ENCODE measurements at regions of chr3 and their contacts with region 1.

Region 1: DNA sequence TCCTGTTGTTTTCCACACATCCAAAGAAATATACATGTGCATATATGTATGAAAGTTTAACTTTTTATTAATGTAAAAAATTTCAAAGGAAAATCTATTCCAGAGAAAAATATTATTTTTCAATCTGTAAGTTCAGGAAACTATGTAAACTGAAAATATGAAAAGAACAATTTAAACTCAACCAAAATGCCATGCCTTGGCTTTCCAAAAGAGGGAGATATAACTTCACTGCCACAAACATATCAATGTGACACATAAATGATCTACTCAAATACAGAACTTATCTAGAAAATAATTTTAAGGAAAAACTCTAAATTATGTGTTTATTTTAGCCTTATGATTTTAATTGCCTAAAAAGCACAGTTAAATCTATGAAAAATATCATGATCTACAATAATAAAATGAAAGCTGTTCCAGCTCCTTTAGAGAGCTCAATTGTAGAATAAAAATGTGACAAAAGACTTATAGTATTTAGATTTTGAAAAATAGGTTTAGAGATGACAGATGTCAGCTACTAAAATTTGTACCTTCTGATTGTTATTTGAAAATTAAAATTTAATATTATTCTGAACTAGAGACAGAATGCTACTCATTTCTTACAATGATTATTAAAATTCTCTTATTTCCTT is 94.8 kb downstream of the GBE1 start:
- DNase-seq: peak; percentile 51
- ATAC-seq: peak; percentile 62
- H3K4me3 ChIP-seq: no peak overlapping the region
- H3K27ac ChIP-seq: no peak overlapping the region
- H3K4me1 ChIP-seq: no peaks in the 10 kb centered on the region
- H3K27me3 ChIP-seq: no peaks in the 10 kb centered on the region
- CTCF ChIP-seq: peak; percentile 91

Region 2: GRCh38 chr3:81485444-81485865 is 181.2 kb before region 1 on chr3:
- CTCF ChIA-PET with region 1: no interaction called
- POLR2A ChIA-PET with region 1: no interaction called
- intact Hi-C with region 1: no loop called
- DNase-seq: peak; percentile 73
- ATAC-seq: peak; percentile 98
- H3K4me3 ChIP-seq: no peak overlapping the region
- H3K27ac ChIP-seq: no peak overlapping the region
- H3K4me1 ChIP-seq: peaks cover 5% of the 10 kb centered on the region
- H3K27me3 ChIP-seq: no peaks in the 10 kb centered on the region
- CTCF ChIP-seq: no peak

Region 3: GRCh38 chr3:81743096-81744025 is 76.8 kb after region 1 on chr3:
- CTCF ChIA-PET with region 1: no interaction called
- POLR2A ChIA-PET with region 1: no interaction called
- intact Hi-C with region 1: loop called (anchors 5 kb)
- DNase-seq: peak; percentile 96
- ATAC-seq: peak; percentile 77
- H3K4me3 ChIP-seq: peak overlapping the region; percentile 31
- H3K27ac ChIP-seq: peak overlapping the region; percentile 83
- H3K4me1 ChIP-seq: peaks cover 43% of the 10 kb centered on the region
- H3K27me3 ChIP-seq: no peaks in the 10 kb centered on the region
- CTCF ChIP-seq: no peak

Region 4: GRCh38 chr3:81871358-81872155 is 204.9 kb after region 1 on chr3:
- CTCF ChIA-PET with region 1: no interaction called
- POLR2A ChIA-PET with region 1: no interaction called
- intact Hi-C with region 1: loop called (anchors 5 kb)
- DNase-seq: peak; percentile 19
- ATAC-seq: no peak
- H3K4me3 ChIP-seq: no peak overlapping the region
- H3K27ac ChIP-seq: no peak overlapping the region
- H3K4me1 ChIP-seq: no peaks in the 10 kb centered on the region
- H3K27me3 ChIP-seq: no peaks in the 10 kb centered on the region
- CTCF ChIP-seq: peak; percentile 65

Region 5: DNA sequence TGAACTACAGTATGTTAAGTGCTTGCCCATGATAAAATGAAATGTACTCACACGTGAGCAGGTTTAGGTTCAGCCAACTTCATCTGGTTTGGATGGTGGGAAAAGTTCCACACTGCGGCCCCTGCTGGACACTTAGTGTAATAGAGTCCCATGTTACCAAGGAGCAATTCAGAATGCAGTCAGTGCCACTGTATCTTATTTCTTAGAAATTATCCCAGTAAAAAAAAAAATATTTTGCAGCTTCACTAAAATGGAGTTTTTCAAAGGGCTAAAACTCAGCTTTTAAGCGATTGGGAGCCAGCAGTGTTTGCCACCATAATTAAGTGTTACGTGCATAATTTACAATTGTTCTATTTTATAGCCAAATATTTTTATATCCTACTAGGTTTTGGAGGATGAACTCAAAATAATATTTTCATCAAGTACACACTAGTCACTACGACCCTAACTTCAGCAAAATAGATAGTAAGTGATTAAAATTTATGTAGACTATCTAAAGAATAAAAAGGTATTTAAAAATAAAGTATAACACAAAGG is 466.5 kb after region 1 on chr3:
- CTCF ChIA-PET with region 1: no interaction called
- POLR2A ChIA-PET with region 1: no interaction called
- intact Hi-C with region 1: loop called (anchors 1 kb)
- DNase-seq: peak; percentile 66
- ATAC-seq: peak; percentile 85
- H3K4me3 ChIP-seq: no peak overlapping the region
- H3K27ac ChIP-seq: no peak overlapping the region
- H3K4me1 ChIP-seq: no peaks in the 10 kb centered on the region
- H3K27me3 ChIP-seq: no peaks in the 10 kb centered on the region
- CTCF ChIP-seq: peak; percentile 91

Region 6: DNA sequence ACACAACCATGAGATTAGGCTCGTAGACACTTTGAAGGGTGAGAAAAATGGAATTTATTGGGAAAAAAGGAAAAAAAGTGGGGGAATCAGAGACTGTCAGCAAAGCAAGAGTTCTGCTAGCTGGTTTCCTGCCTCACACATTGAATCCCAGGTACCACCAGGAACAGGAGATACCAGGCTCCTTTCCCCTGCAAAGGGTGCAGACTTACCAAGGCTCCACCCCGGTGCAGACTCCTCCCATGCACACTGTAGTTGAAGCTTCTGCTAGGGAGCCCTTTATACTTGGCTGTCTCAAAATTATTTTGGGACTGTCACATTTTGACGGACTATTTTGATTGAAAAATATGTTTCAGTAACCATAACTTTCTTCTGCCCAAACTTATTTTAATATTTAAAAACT is 914.7 kb after region 1 on chr3:
- CTCF ChIA-PET with region 1: no interaction called
- POLR2A ChIA-PET with region 1: no interaction called
- intact Hi-C with region 1: no loop called
- DNase-seq: no peak
- ATAC-seq: no peak; the same call in 1 of the 2 replicates
- H3K4me3 ChIP-seq: no peak overlapping the region
- H3K27ac ChIP-seq: no peak overlapping the region
- H3K4me1 ChIP-seq: no peaks in the 10 kb centered on the region
- H3K27me3 ChIP-seq: no peaks in the 10 kb centered on the region
- CTCF ChIP-seq: no peak

Region 7: GRCh38 chr3:83514130-83514914 is 1847.7 kb after region 1 on chr3:
- CTCF ChIA-PET with region 1: no interaction called
- POLR2A ChIA-PET with region 1: no interaction called
- intact Hi-C with region 1: loop called (anchors 5 kb)
- DNase-seq: peak; percentile 93
- ATAC-seq: peak; percentile 86
- H3K4me3 ChIP-seq: no peak overlapping the region
- H3K27ac ChIP-seq: peak overlapping the region; percentile 58
- H3K4me1 ChIP-seq: peaks cover 16% of the 10 kb centered on the region
- H3K27me3 ChIP-seq: no peaks in the 10 kb centered on the region
- CTCF ChIP-seq: no peak